Common myeloid progenitor, CD34-positive (primary cell): ENCODE measurements at regions of chr18 and their contacts with region 1.

Region 1: GRCh38 chr18:50819728-50820378 is at the start of gene MRO:
- DNase-seq: peak; percentile 75 to 88 (median 86)
- H3K4me3 ChIP-seq: peak within 1 kb of the TSS in 6 of 7 experiments; percentile 48 to 78 (median 66)
- H3K27ac ChIP-seq: no peak within 1 kb of the TSS
- H3K4me1 ChIP-seq: peaks cover 9 to 19% (median 15%) of the 10 kb centered on the region in 4 experiments
- H3K27me3 ChIP-seq: peaks cover 0 to 5% (median 2%) of the 10 kb centered on the region in 5 experiments

Region 2: DNA sequence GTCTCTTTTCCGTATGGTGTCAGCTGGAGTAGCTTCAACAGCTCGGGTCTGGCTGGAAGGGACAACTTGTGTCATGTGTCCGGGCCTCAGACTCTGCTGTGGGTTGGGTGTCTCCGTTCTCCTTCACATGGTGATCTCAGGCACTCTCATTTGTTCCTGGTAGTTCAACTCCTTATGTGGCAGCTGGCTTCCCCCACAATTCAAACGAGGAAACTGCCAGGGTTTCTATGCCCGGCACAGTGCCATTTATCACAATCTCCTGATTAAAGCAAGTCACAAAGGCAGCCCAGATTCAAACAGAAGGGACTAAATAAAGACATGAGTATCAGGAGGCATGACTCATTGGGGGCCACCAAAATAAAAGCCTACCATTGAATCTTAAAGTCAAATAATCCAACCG is 22.7 kb before region 1 on chr18:
- CTCF ChIA-PET with region 1: no interaction called
- POLR2A ChIA-PET with region 1: no interaction called
- DNase-seq: no peak
- H3K4me3 ChIP-seq: no peak overlapping the region
- H3K27ac ChIP-seq: no peak overlapping the region
- H3K4me1 ChIP-seq: no peaks in the 10 kb centered on the region
- H3K27me3 ChIP-seq: peaks cover 0 to 16% (median 8%) of the 10 kb centered on the region in 5 experiments

Region 3: GRCh38 chr18:50832754-50833153 is 12.9 kb after region 1 on chr18:
- CTCF ChIA-PET with region 1: interaction called, 27 read pairs
- POLR2A ChIA-PET with region 1: no interaction called
- DNase-seq: no peak
- H3K4me3 ChIP-seq: no peak overlapping the region
- H3K27ac ChIP-seq: no peak overlapping the region
- H3K4me1 ChIP-seq: peaks cover 7 to 12% (median 10%) of the 10 kb centered on the region in 4 experiments
- H3K27me3 ChIP-seq: no peaks in the 10 kb centered on the region

Region 4: DNA sequence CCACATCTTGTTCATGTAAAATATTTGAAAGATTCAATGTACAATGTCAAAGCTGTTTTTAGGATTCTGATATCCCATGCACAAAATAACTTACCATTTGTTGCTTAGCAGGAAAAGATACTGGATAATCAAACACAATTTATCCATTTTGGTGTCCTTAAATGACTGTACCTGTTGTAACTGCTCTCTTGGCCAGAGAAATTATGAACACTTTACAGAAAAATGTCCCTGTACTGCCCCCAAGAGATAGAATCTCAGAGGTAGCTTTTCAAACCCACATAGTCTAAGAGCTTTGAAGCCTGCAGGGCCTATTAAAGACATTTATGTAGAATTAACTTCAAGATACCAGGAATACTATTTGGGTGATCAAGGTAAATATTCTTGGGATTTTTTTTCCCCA is 46.9 kb after region 1 on chr18:
- CTCF ChIA-PET with region 1: interaction called, 17 read pairs
- POLR2A ChIA-PET with region 1: no interaction called
- DNase-seq: peak in 2 of 3 donors; percentile 27 to 38
- H3K4me3 ChIP-seq: no peak overlapping the region
- H3K27ac ChIP-seq: no peak overlapping the region
- H3K4me1 ChIP-seq: peaks cover 0 to 10% (median 6%) of the 10 kb centered on the region in 4 experiments
- H3K27me3 ChIP-seq: no peaks in the 10 kb centered on the region

Region 5: GRCh38 chr18:50928551-50928950 is 108.7 kb after region 1 on chr18:
- CTCF ChIA-PET with region 1: no interaction called
- POLR2A ChIA-PET with region 1: no interaction called
- DNase-seq: no peak
- H3K4me3 ChIP-seq: no peak overlapping the region
- H3K27ac ChIP-seq: no peak overlapping the region
- H3K4me1 ChIP-seq: no peaks in the 10 kb centered on the region
- H3K27me3 ChIP-seq: no peaks in the 10 kb centered on the region